Activated B cell treated with CpG ODN at 0.5 μM for 24 hours (primary cell): ENCODE measurements at regions of chr4 and their contacts with region 1.

Region 1: DNA sequence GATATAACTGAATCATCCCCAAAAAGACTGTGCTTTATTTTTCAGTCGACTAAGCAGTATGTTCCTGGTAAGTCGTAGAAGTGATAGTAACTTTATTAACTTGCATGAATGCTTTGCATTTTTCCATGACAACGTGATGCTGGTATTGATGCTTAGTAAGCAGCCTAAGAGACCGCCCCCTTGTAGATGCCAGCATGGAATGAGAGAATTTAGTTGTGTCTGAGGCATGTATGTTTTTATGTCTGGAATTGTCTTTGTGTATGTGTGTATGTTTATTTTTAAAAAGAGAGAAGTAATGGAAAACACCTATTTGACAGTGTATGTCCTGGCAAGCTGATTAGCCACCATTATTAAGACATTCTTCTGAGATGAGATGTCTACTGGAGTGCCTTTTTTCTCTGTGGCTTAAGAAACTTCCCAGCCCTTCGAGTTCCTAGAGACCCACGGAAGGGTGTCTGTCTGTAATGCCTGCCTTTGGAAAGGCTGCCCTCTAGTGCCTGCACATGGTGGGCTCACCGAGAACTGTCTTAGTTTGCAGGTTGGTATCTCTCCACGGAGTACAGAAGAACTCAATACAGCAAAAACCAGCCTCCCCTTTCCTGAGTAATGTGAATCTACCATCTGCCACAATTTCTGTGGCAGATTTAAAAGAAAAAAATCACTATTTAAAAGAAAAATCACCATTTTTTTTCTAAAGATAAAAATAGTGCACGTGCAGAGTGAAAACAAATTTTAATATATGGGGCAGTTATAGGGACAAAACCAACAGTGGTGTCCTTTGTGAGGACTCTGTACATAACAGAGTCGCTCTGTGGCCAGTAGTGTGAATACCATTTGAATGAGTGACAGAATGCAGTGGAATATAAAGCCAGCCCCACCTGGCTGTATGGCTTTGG is 85.9 kb downstream of the AASDH start:
- DNase-seq: no peak
- ATAC-seq: peak; percentile 68
- H3K4me3 Mint-ChIP-seq: no peak overlapping the region
- H3K27ac Mint-ChIP-seq: no peak overlapping the region
- H3K4me1 Mint-ChIP-seq: peaks cover 6% of the 10 kb centered on the region
- H3K27me3 Mint-ChIP-seq: no peaks in the 10 kb centered on the region
- CTCF ChIP-seq: no peak

Region 2: DNA sequence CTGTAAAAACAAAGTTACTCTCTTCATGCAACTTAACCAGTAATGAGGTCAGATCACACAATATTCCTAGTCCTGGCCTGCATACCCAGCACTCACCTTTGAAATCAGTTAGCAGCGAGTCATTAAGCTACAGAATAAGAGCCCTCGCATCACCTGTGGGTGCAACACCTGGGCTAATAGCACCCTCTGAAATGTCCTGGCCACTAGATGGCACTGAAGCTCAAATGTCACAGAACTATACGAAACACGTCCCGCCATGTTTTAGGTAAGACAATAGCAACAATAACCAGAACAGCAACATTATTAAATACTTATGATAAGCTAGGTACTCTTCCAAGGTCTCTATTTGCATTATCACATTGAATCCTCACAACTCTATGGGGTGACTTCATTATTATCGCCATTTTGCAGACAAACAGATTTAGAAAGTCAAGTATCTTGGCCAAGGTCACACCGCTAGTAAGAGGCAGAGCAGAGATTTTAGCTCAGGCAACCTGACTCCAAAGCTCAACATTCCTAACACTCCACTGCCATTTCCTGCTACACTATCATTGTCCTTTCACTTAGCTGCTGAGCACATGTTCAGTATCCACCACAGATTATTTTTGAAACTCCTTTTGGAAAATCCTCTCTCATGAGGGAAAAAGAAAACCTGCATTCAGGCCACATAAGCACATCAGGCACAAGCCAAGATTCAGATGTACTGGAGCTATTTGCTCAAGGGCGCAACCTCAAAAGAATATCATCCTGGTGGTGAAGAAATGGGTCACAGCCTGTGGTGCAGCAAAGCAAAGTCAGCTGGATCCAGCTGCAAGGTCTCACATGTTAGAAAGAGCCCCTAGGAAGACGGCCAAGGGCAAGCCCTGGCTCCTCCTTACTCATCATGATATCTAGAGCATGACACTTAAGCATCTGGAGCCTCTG is 1116.6 kb before region 1 on chr4:
- CTCF ChIA-PET with region 1: no interaction called
- POLR2A ChIA-PET with region 1: no interaction called
- intact Hi-C with region 1: loop called (anchors 2 kb)
- DNase-seq: no peak
- ATAC-seq: no peak
- H3K4me3 Mint-ChIP-seq: no peak overlapping the region
- H3K27ac Mint-ChIP-seq: no peak overlapping the region
- H3K4me1 Mint-ChIP-seq: no peaks in the 10 kb centered on the region
- H3K27me3 Mint-ChIP-seq: peaks cover 6% of the 10 kb centered on the region
- CTCF ChIP-seq: no peak

Region 3: DNA sequence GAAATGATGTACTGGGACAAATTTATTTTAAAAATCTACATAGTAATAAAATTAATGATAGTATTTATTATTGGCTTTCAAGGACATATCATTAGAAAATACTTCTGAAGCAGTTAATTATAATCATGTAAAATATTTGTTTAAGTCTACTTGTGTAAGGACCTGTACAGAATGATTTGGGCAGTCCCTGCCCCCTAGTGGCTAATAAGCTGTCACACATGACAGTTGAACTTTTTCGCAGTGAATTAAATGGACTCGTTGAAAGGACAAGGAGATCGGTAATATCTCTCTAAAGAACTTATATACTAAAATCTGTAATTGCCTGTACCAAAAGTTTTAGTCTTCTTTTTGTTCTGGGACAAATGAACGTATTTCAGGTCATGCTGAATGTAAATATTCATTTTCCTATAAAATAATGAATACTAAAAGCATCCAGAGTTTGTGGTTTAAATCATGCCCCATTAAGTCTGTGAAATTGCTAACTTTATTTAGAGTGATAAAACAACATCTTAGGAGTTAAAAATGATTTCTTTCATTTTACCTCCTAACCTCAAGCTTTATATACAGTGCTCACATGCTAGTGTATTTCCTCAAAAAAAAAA is 434.4 kb before region 1 on chr4:
- CTCF ChIA-PET with region 1: no interaction called
- POLR2A ChIA-PET with region 1: no interaction called
- intact Hi-C with region 1: loop called (anchors 10 kb)
- DNase-seq: no peak
- ATAC-seq: peak; percentile 84
- H3K4me3 Mint-ChIP-seq: no peak overlapping the region
- H3K27ac Mint-ChIP-seq: no peak overlapping the region
- H3K4me1 Mint-ChIP-seq: peaks cover 22% of the 10 kb centered on the region
- H3K27me3 Mint-ChIP-seq: no peaks in the 10 kb centered on the region
- CTCF ChIP-seq: no peak

Region 4: DNA sequence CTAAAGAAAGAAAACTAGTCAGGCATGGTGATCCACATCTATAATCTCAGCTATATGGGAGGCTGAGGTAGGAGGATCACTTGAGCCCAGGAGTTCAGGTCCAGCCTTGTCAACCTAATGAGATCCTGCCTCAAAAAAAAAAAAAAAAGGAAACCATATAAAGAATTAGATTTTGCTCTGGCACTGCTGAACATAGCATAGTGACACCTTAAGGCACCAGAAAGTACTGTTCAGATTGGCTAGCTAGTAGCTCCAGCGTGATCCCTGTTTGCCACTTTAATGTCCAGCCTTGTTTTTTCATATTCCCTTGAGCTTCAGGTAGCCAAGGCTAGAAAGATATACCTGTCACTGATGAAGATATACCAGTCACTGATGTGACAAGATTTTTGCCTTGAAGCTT is 413.8 kb before region 1 on chr4:
- CTCF ChIA-PET with region 1: no interaction called
- POLR2A ChIA-PET with region 1: no interaction called
- intact Hi-C with region 1: loop called (anchors 5 kb)
- DNase-seq: no peak
- ATAC-seq: no peak
- H3K4me3 Mint-ChIP-seq: no peak overlapping the region
- H3K27ac Mint-ChIP-seq: no peak overlapping the region
- H3K4me1 Mint-ChIP-seq: peaks cover 20% of the 10 kb centered on the region
- H3K27me3 Mint-ChIP-seq: no peaks in the 10 kb centered on the region
- CTCF ChIP-seq: no peak

Region 5: DNA sequence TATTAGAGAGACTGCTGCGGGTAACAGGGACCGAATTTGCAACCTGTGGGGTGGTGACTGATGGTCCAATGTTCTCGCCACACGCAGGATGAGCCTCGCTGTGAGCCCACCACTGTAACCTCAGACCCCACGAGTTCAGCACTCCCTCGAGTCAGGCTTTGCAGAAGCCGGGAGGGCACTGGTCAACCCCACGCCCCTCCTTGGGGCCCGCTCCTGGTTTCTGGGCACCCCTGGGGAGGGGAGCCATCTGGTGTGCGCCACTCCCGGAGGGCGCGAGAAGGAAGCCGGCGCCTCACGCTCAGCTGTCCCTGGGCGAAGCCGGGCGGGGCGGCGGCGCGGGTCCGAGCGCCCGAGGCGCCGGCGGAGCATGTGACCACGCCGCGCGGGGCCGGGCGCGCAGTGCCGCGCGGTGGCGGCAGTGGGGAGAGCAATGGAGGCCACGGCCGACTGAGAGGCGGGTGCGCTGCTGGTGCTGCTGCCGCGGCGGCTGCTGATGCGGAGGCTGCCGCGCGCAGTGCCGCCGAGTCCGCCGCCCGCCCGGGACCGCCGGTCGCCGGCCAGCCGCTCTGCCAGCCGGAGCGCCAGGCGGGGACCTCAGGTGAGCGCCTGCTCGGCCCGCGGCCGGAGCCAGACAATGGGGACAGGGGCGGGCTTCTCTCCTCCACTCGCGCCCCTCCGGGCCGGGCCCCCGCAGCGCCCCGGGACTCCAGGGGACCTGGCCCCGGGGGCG is 252.6 kb before region 1 on chr4:
- CTCF ChIA-PET with region 1: no interaction called
- POLR2A ChIA-PET with region 1: no interaction called
- intact Hi-C with region 1: loop called (anchors 1 kb)
- DNase-seq: peak; percentile 47
- ATAC-seq: peak; percentile 95
- H3K4me3 Mint-ChIP-seq: peak overlapping the region; percentile 79
- H3K27ac Mint-ChIP-seq: no peak overlapping the region
- H3K4me1 Mint-ChIP-seq: peaks cover 20% of the 10 kb centered on the region
- H3K27me3 Mint-ChIP-seq: peaks cover 25% of the 10 kb centered on the region
- CTCF ChIP-seq: no peak